Activated CD8-positive, alpha-beta memory T cell treated with anti-CD3 and anti-CD28 coated beads, Interleukin-2, amount 10 ng/mL, durations not matched to agents 7 days and 5 days (primary cell): ENCODE measurements at regions of chr21 and their contacts with region 1.

Region 1: DNA sequence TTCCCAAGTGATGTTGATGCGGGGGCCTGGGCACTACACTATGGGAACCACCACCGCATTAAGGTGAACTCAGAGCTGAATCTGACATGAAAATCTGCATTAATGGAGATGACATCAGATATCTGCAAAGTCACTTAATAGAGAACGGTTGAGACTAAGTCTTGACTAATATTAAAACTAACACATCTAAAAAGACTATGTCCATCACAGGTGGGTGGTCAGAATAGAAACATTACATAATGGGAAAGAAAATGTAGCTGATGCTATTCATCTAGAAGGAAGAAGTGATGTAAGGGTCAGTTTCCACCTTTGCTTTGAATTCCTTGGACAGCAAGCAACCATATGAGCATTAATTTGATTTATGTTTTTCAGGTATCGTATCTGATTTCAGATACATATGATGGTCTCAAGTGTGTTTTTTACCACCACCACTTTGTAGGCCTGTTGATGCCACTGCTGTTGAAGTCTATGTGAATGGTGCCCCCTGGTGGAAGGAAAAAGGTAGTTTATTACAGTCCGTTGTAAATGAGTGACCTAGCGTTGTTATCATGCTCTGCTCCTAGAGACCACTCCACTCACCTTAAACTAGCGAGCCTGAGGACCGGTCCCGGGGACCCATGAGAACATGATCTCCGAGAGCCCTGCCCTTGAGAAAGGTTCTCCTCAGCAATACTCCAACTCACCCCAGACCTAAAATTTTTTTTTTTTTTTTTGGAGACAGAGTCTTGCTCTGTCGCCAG is 73.5 kb downstream of the BACH1 start:
- DNase-seq: peak; percentile 60
- ATAC-seq: peak; percentile 89
- H3K4me3 Mint-ChIP-seq: no peak overlapping the region
- H3K27ac Mint-ChIP-seq: no peak overlapping the region
- H3K4me1 Mint-ChIP-seq: peaks cover 5% of the 10 kb centered on the region
- H3K27me3 Mint-ChIP-seq: no peaks in the 10 kb centered on the region

Region 2: GRCh38 chr21:29085106-29085752 is 287.0 kb before region 1 on chr21:
- CTCF ChIA-PET with region 1: interaction called, 21 read pairs
- DNase-seq: no peak
- ATAC-seq: no peak
- H3K4me3 Mint-ChIP-seq: no peak overlapping the region
- H3K27ac Mint-ChIP-seq: no peak overlapping the region
- H3K4me1 Mint-ChIP-seq: peaks cover 22% of the 10 kb centered on the region
- H3K27me3 Mint-ChIP-seq: peaks cover 3% of the 10 kb centered on the region

Region 3: GRCh38 chr21:29349702-29350101 is 22.5 kb before region 1 on chr21:
- CTCF ChIA-PET with region 1: interaction called, 15 read pairs
- DNase-seq: no peak
- ATAC-seq: no peak
- H3K4me3 Mint-ChIP-seq: no peak overlapping the region
- H3K27ac Mint-ChIP-seq: no peak overlapping the region
- H3K4me1 Mint-ChIP-seq: peaks cover 13% of the 10 kb centered on the region
- H3K27me3 Mint-ChIP-seq: no peaks in the 10 kb centered on the region

Region 4: GRCh38 chr21:29613021-29613420 is 240.8 kb after region 1 on chr21:
- CTCF ChIA-PET with region 1: no interaction called
- DNase-seq: no peak
- ATAC-seq: no peak
- H3K4me3 Mint-ChIP-seq: no peak overlapping the region
- H3K27ac Mint-ChIP-seq: no peak overlapping the region
- H3K4me1 Mint-ChIP-seq: no peaks in the 10 kb centered on the region
- H3K27me3 Mint-ChIP-seq: peaks cover 2% of the 10 kb centered on the region